ENCODE measurements at regions of chr4 and their contacts with region 1.

Region 1: GRCh38 chr4:145148980-145149379 is 31.4 kb downstream of the OTUD4 start:
- DNase-seq: no peak
- H3K4me3 Mint-ChIP-seq: no peak overlapping the region
- H3K27ac Mint-ChIP-seq: no peak overlapping the region
- H3K4me1 Mint-ChIP-seq: peaks cover 9% of the 10 kb centered on the region
- H3K27me3 Mint-ChIP-seq: no peaks in the 10 kb centered on the region

Region 2: DNA sequence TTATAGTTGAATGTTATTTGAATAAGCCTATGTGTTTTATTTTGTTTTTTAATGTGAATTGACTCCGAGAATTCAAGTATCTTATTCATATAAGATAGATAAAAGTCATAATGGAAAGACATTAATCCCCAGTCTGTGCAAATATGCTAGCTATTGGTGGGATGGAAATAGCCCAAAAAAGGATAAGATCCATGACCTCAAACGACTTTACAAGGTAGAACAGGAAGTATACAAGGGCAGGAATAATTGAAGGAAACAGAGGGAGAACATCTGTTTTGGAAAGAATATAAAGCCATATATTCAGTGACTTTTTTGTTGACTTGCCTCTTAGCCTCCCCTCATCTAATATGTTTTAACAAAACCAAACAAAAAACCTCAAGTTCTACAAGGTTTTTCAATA is 41.9 kb before region 1 on chr4:
- CTCF ChIA-PET with region 1: no interaction called
- intact Hi-C with region 1: loop called (anchors 5 kb)
- DNase-seq: no peak
- H3K4me3 Mint-ChIP-seq: no peak overlapping the region
- H3K27ac Mint-ChIP-seq: no peak overlapping the region
- H3K4me1 Mint-ChIP-seq: peaks cover 13% of the 10 kb centered on the region
- H3K27me3 Mint-ChIP-seq: no peaks in the 10 kb centered on the region